ENCODE measurements at regions of chr19 and their contacts with region 1.

Region 1: GRCh38 chr19:42095814-42096230 is 19.9 kb downstream of the ZNF574 start:
- DNase-seq: peak; percentile 43 to 99
- H3K4me3 ChIP-seq: peak overlapping the region; percentile 11 to 54 (median 34); a peak in 6 of 8 replicates
- H3K27ac ChIP-seq: no peak overlapping the region
- H3K4me1 ChIP-seq: peaks cover 0 to 17% (median 5%) of the 10 kb centered on the region in 4 experiments; a peak in 6 of 7 replicates
- H3K27me3 ChIP-seq: peaks cover 0 to 5% (median 2%) of the 10 kb centered on the region in 4 experiments; a peak in 2 of 7 replicates
- CTCF ChIP-seq: no peak
- EP300 ChIP-seq: no peak
- POLR2A ChIP-seq: no peak
- RAD21 ChIP-seq: no peak

Region 2: GRCh38 chr19:42081584-42082203 is 14.1 kb before region 1 on chr19:
- CTCF ChIA-PET with region 1: interaction called, 12 read pairs
- POLR2A ChIA-PET with region 1: interaction called, 13 read pairs
- DNase-seq: no peak
- H3K4me3 ChIP-seq: no peak overlapping the region
- H3K27ac ChIP-seq: no peak overlapping the region
- H3K4me1 ChIP-seq: peaks cover 0 to 2% (median under 1%) of the 10 kb centered on the region in 4 experiments; a peak in 2 of 7 replicates
- H3K27me3 ChIP-seq: no peaks in the 10 kb centered on the region
- CTCF ChIP-seq: peak; percentile 18 to 64 (median 37); a peak in 3 of 4 replicates
- EP300 ChIP-seq: no peak
- POLR2A ChIP-seq: 0 out of 3 replicates have a peak, but pooled peaks of 1 of the 2 experiments have one; percentile 21
- RAD21 ChIP-seq: peak; percentile 41 to 57